ENCODE measurements at regions of chr2 and their contacts with region 1.

Region 1: DNA sequence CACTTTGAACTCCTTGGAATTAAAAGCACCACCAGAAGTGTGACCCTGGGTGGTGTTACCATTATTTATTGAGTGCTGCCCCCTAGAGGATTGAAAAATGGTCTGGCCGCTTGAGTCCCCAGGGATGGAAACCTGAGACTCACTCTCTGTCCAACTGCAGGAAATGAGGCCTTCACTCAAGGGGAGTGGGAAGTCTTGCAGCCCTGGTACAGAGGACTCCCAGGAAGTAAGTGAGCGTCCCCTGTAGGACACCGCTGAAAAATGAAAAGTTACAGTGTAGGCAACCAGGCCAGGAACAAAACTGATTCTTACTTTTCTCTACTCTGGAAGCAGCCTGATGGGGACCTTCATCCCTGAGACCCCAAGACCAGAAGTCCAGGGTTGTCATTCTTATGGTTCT is 2.2 kb upstream of the NRP2 start:
- DNase-seq: peak; percentile 89
- ATAC-seq: peak; percentile 81
- H3K4me3 ChIP-seq: no peak overlapping the region
- H3K27ac ChIP-seq: no peak overlapping the region
- H3K4me1 ChIP-seq: peaks cover 2 to 32% of the 10 kb centered on the region in 2 experiments; a peak in 3 of 4 replicates
- H3K27me3 ChIP-seq: peaks cover 8% of the 10 kb centered on the region; the same call in 1 of the 2 replicates
- CTCF ChIP-seq: peak; percentile 73 to 89 (median 83)
- POLR2A ChIP-seq: no peak
- RAD21 ChIP-seq: peak; percentile 69

Region 2: GRCh38 chr2:204145263-204145751 is 1534.8 kb before region 1 on chr2:
- CTCF ChIA-PET with region 1: no interaction called
- POLR2A ChIA-PET with region 1: no interaction called
- RAD21 ChIA-PET with region 1: no interaction called
- intact Hi-C with region 1: loop called (anchors 10 kb)
- DNase-seq: peak; percentile 60
- ATAC-seq: peak; percentile 100
- H3K4me3 ChIP-seq: no peak overlapping the region
- H3K27ac ChIP-seq: no peak overlapping the region
- H3K4me1 ChIP-seq: no peaks in the 10 kb centered on the region
- H3K27me3 ChIP-seq: peaks cover 4% of the 10 kb centered on the region; the same call in 1 of the 2 replicates
- CTCF ChIP-seq: peak; percentile 73 to 98 (median 90)
- POLR2A ChIP-seq: no peak
- RAD21 ChIP-seq: peak; percentile 91

Region 3: DNA sequence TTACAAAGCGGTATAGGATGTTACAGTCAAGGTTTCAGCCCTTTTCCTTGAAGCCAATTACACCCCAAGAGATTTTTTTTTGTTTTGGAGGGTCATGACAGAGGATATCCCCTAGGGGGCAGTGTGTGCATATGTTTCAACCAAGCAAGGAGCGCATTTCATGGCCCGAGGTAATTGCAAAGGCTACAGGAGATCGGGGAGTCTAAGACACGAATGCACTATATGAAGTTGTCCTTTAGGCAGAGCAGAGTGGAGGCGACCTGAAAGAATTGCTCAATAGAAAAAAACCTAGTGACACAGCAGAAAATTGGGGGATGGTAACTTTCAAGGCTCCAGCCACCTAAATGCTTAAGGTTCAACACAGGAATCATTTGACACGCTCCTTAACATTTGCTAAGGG is 1354.6 kb before region 1 on chr2:
- CTCF ChIA-PET with region 1: interaction called, 7 read pairs
- POLR2A ChIA-PET with region 1: no interaction called
- RAD21 ChIA-PET with region 1: no interaction called
- intact Hi-C with region 1: loop called (anchors 1 kb)
- DNase-seq: peak; percentile 62
- ATAC-seq: peak; percentile 91
- H3K4me3 ChIP-seq: no peak overlapping the region
- H3K27ac ChIP-seq: no peak overlapping the region
- H3K4me1 ChIP-seq: no peaks in the 10 kb centered on the region
- H3K27me3 ChIP-seq: no peaks in the 10 kb centered on the region
- CTCF ChIP-seq: peak; percentile 58 to 87 (median 72); a peak in 5 of 6 replicates
- POLR2A ChIP-seq: no peak
- RAD21 ChIP-seq: peak; percentile 88

Region 4: DNA sequence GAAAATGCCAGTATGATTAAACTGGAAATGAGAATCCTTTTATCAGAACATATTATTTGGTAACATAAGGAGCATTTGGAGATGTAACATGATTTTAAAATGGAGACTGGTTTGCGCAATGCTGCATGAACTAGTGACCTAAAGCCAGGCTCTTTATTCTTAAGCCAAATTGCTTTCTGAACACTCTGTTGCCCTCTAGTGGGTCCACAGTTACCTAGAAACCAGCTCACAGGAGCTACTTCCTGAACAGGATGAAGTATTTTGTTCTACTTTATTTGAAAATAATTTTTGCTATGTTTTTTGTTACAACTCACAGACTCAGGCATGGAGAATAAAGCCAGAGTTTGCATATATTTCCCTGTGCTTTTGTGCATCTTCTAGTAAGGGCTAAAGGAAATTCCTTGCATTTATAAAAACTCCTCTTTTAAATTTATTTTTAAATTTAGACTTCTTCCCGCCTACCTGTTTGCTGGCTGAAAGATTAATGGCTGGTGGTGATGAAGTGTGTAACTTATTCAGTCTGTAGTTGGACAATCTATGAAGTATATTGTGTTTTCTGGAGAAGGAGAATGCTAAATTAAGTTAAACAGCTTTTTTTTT is 988.1 kb before region 1 on chr2:
- CTCF ChIA-PET with region 1: interaction called, 7 read pairs
- POLR2A ChIA-PET with region 1: no interaction called
- RAD21 ChIA-PET with region 1: no interaction called
- intact Hi-C with region 1: loop called (anchors 10 kb)
- DNase-seq: peak; percentile 10
- ATAC-seq: no peak
- H3K4me3 ChIP-seq: no peak overlapping the region
- H3K27ac ChIP-seq: no peak overlapping the region
- H3K4me1 ChIP-seq: no peaks in the 10 kb centered on the region
- H3K27me3 ChIP-seq: no peaks in the 10 kb centered on the region
- CTCF ChIP-seq: peak; percentile 9 to 34 (median 31); a peak in 3 of 6 replicates
- POLR2A ChIP-seq: no peak
- RAD21 ChIP-seq: peak; percentile 39; the same call in 1 of the 2 replicates

Region 5: GRCh38 chr2:205323929-205324328 is 356.1 kb before region 1 on chr2:
- CTCF ChIA-PET with region 1: interaction called, 6 read pairs
- POLR2A ChIA-PET with region 1: no interaction called
- RAD21 ChIA-PET with region 1: no interaction called
- intact Hi-C with region 1: loop called (anchors 2 kb)
- DNase-seq: no peak
- ATAC-seq: peak; percentile 58; the same call in 1 of the 2 replicates
- H3K4me3 ChIP-seq: no peak overlapping the region
- H3K27ac ChIP-seq: no peak overlapping the region
- H3K4me1 ChIP-seq: no peaks in the 10 kb centered on the region
- H3K27me3 ChIP-seq: no peaks in the 10 kb centered on the region
- CTCF ChIP-seq: peak; percentile 15 to 49 (median 39); a peak in 5 of 6 replicates
- POLR2A ChIP-seq: no peak
- RAD21 ChIP-seq: peak; percentile 42

Region 6: DNA sequence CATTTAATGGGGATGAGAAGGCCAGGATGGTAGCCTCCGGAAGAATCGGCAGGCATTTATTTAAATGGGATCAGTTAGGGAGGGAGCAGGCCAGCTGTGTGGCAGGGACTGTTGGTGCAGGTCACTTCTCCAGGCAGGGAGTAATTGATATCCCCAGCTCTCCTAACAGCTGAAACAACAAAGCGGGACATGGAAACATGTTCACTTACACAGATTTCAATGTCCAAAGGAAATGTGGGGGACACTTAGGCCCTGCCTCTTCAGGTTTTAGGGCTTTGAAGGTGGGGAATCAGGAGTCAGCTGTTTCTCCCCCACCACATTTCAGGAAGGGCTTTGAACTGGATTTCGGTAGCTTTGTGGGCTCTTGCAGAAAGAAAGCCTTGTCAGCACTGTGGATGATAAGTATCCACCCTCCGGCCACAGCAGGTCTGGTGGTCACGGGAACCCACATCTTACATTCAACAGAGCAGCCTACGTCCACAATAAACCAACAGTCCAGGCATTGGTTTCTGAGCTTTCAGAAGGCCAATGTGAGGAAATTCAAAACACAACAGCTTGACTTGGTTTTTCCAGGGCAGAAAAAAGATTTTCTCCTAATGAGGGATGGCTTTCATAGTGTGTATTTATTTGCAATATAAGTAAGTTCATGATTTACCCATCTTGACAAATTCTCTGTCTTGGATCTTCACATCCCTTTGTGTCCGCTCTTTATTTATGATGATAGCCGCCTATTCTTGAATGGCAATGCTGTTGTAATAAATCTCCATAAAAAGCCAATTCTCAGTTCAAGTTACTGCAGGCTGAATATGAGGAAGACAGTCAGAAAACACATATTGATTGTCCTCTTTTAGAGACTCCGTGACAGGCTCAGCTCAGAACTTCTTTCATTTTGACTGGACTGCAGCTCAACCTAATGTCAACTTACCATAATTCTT is 94.4 kb before region 1 on chr2:
- CTCF ChIA-PET with region 1: no interaction called
- POLR2A ChIA-PET with region 1: no interaction called
- RAD21 ChIA-PET with region 1: no interaction called
- intact Hi-C with region 1: no loop called
- DNase-seq: no peak
- ATAC-seq: no peak
- H3K4me3 ChIP-seq: no peak overlapping the region
- H3K27ac ChIP-seq: no peak overlapping the region
- H3K4me1 ChIP-seq: no peaks in the 10 kb centered on the region
- H3K27me3 ChIP-seq: no peaks in the 10 kb centered on the region
- CTCF ChIP-seq: no peak
- POLR2A ChIP-seq: no peak
- RAD21 ChIP-seq: no peak

Region 7: GRCh38 chr2:205696331-205696923 is 16.4 kb after region 1 on chr2:
- CTCF ChIA-PET with region 1: no interaction called
- POLR2A ChIA-PET with region 1: no interaction called
- RAD21 ChIA-PET with region 1: no interaction called
- intact Hi-C with region 1: no loop called
- DNase-seq: no peak
- ATAC-seq: peak; percentile 65; the same call in 1 of the 2 replicates
- H3K4me3 ChIP-seq: no peak overlapping the region
- H3K27ac ChIP-seq: no peak overlapping the region
- H3K4me1 ChIP-seq: peaks cover 0 to 16% of the 10 kb centered on the region in 2 experiments; a peak in 3 of 4 replicates
- H3K27me3 ChIP-seq: no peaks in the 10 kb centered on the region
- CTCF ChIP-seq: peak; percentile 25 to 42 (median 37); a peak in 4 of 6 replicates
- POLR2A ChIP-seq: no peak
- RAD21 ChIP-seq: peak; percentile 69

Region 8: GRCh38 chr2:205925373-205926337 is 245.6 kb after region 1 on chr2:
- CTCF ChIA-PET with region 1: interaction called, 9 read pairs
- POLR2A ChIA-PET with region 1: no interaction called
- RAD21 ChIA-PET with region 1: no interaction called
- intact Hi-C with region 1: loop called (anchors 5 kb)
- DNase-seq: no peak
- ATAC-seq: peak; percentile 99
- H3K4me3 ChIP-seq: peak overlapping the region; percentile 9 to 19; a peak in 1 of 4 replicates
- H3K27ac ChIP-seq: no peak overlapping the region
- H3K4me1 ChIP-seq: peaks cover 0 to 8% of the 10 kb centered on the region in 2 experiments; a peak in 2 of 4 replicates
- H3K27me3 ChIP-seq: peaks cover 25% of the 10 kb centered on the region
- CTCF ChIP-seq: peak; percentile 85 to 93 (median 90)
- POLR2A ChIP-seq: no peak
- RAD21 ChIP-seq: peak; percentile 95

Measured in HCT116 (cell line).